ENCODE measurements at regions of chr2 and their contacts with region 1.

Region 1: GRCh38 chr2:215454519-215455246 is 18.8 kb upstream of the FN1 start:
- DNase-seq: no peak
- H3K4me3 ChIP-seq: no peak overlapping the region
- H3K27ac ChIP-seq: no peak overlapping the region
- H3K4me1 ChIP-seq: peaks cover 0 to 10% (median 3%) of the 10 kb centered on the region in 4 donors
- H3K27me3 ChIP-seq: no peaks in the 10 kb centered on the region
- CTCF ChIP-seq: peak; percentile 70 to 81 (median 77)
- EP300 ChIP-seq: no peak
- POLR2A ChIP-seq: no peak

Region 2: DNA sequence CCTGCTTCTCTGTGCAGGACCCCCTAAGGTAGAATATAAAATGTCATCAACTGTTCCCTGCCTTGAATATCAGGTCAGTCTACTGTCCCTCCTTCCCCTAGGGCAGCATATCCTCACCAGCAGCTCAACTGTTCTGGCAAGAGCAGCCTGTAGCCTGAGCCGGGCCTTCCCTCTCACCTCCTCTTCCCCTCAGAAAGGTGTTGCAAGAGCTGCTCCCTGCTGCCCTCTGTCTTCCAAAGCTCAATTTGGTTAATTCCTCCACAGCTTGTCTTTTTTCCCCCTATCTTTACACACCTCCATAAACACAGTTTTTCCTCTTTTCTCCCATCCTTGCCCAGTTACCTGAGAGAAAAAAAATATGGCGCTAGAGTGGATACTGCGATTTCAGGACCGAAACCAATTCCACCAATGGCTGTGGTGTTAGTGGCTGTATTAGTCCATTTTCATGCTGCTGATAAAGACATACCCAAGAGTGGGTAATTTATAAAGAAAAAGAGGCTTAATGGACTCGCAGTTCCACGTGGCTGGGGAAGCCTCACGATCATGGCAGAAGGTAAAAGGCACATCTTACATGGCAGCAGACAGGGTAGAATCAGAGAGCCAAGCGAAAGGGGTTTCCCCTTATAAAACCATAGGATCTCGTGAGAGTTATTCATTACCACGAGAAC is 374.0 kb after region 1 on chr2:
- intact Hi-C with region 1: loop called (anchors 5 kb)
- DNase-seq: peak; percentile 91
- H3K4me3 ChIP-seq: no peak overlapping the region
- H3K27ac ChIP-seq: no peak overlapping the region
- H3K4me1 ChIP-seq: peaks cover 0 to 53% (median 47%) of the 10 kb centered on the region in 4 donors
- H3K27me3 ChIP-seq: no peaks in the 10 kb centered on the region
- CTCF ChIP-seq: peak; percentile 44 to 56 (median 47)
- EP300 ChIP-seq: no peak
- POLR2A ChIP-seq: no peak